Naive thymus-derived CD8-positive, alpha-beta T cell (primary cell): ENCODE measurements at regions of chr3 and their contacts with region 1.

Region 1: GRCh38 chr3:179322286-179323196 is at the start of gene ZNF639:
- DNase-seq: peak; percentile 82 to 92 (median 89)
- ATAC-seq: peak; percentile 80 to 86
- H3K4me3 Mint-ChIP-seq: peak within 1 kb of the TSS; percentile 83 to 97 (median 90)
- H3K27ac Mint-ChIP-seq: peak within 1 kb of the TSS; percentile 92 to 96 (median 95)
- H3K4me1 Mint-ChIP-seq: peaks cover 13 to 45% (median 37%) of the 10 kb centered on the region in 4 donors
- H3K27me3 Mint-ChIP-seq: no peaks in the 10 kb centered on the region
- polyA plus RNA-seq, gene ZNF639: 56.5 to 63.0 (median 60.1) TPM

Region 2: DNA sequence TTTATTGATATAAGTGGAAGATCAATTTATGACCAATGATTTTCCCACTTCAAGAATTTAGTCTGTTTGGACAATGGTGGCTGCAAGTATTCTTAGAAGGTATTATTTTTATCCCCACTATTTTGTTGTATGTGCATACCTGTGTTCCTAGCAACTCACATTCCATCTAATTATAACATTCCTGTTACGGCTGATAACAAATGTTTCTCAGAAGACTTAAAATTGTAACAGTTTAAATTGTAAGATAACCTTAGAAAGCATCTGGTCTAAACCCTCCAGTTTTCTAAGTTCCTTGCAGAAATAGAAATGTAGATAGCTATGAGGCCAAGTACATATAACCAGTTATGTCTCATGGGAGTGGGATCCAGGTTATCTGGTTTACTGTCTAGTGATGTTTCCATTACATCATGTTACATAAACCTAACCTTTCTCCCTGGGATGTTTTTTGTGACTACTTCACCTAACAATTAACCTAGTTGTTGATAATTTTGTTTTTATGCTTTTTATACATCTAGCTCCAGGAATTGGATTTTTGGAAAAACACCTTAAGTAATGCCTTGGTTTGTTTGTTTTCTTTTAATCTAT is 13.9 kb after region 1 on chr3:
- POLR2A ChIA-PET with region 1: no interaction called
- DNase-seq: no peak
- ATAC-seq: no peak
- H3K4me3 Mint-ChIP-seq: no peak overlapping the region
- H3K27ac Mint-ChIP-seq: peak overlapping the region in 1 of 10 donors; percentile 36
- H3K4me1 Mint-ChIP-seq: peaks cover 0 to 6% (median 1%) of the 10 kb centered on the region in 4 donors
- H3K27me3 Mint-ChIP-seq: no peaks in the 10 kb centered on the region

Region 3: GRCh38 chr3:179347345-179348194 is 25.0 kb after region 1 on chr3 and contains the start of gene MFN1:
- POLR2A ChIA-PET with region 1: interaction called, 27 read pairs
- DNase-seq: peak; percentile 73 to 95 (median 86)
- ATAC-seq: peak; percentile 96 to 99
- H3K4me3 Mint-ChIP-seq: peak within 1 kb of the TSS; percentile 95 to 100 (median 97)
- H3K27ac Mint-ChIP-seq: peak within 1 kb of the TSS; percentile 91 to 99 (median 97)
- H3K4me1 Mint-ChIP-seq: peaks cover 6 to 45% (median 24%) of the 10 kb centered on the region in 4 donors
- H3K27me3 Mint-ChIP-seq: no peaks in the 10 kb centered on the region
- polyA plus RNA-seq, gene MFN1: 4.9 to 9.5 (median 8.8) TPM